ENCODE measurements at regions of chr15 and their contacts with region 1.

Region 1: DNA sequence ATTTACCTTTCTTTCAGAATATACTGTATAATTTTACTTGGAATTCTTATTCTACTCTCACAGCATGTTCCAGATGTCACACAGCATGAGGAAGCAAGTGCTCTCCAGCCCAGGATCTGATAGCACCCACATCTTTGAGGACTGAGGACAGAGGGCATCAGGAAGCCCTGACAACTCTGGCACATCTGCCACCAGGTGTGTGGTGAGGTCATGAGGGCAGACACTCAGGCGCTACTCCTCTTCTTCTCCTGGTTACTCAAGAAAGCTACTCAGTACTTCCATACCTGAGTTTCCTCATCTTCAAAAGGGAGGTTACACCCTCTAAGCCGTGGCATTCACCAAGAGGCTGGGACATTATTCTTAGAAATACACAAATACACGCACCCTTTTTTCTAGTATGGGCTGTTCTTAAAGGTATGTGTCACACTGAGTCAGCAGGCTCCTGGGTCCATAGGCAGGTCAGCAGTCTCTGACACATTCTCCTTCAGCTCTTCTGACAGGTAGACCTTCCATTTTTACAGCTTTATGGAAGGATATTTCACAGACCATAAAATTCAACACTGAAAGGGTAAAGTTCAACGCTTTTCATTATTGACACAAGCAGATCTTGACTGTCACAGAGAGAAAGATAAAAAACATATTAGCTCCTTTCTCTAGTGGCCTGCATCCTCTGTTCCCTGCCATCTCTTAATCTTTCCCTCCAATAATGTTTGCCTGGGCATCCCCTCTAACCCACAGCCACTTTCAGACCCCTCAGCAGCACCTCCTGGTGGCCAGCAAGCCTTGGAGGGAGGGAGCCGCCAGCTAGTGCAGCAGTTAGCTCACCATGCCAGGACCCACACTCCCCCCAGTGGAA is 103.2 kb upstream of the TJP1 start:
- DNase-seq: peak; percentile 68
- H3K4me3 Mint-ChIP-seq: no peak overlapping the region
- H3K27ac Mint-ChIP-seq: peak overlapping the region; percentile 67
- H3K4me1 Mint-ChIP-seq: peaks cover 28% of the 10 kb centered on the region
- H3K27me3 Mint-ChIP-seq: no peaks in the 10 kb centered on the region
- CTCF ChIP-seq: peak; percentile 70

Region 2: GRCh38 chr15:29115093-29115991 is 810.1 kb before region 1 on chr15:
- CTCF ChIA-PET with region 1: no interaction called
- POLR2A ChIA-PET with region 1: no interaction called
- intact Hi-C with region 1: no loop called
- DNase-seq: no peak
- H3K4me3 Mint-ChIP-seq: no peak overlapping the region
- H3K27ac Mint-ChIP-seq: no peak overlapping the region
- H3K4me1 Mint-ChIP-seq: no peaks in the 10 kb centered on the region
- H3K27me3 Mint-ChIP-seq: peaks cover 25% of the 10 kb centered on the region
- CTCF ChIP-seq: no peak

Region 3: GRCh38 chr15:29631076-29632070 is 294.1 kb before region 1 on chr15:
- CTCF ChIA-PET with region 1: no interaction called
- POLR2A ChIA-PET with region 1: no interaction called
- intact Hi-C with region 1: no loop called
- DNase-seq: no peak
- H3K4me3 Mint-ChIP-seq: no peak overlapping the region
- H3K27ac Mint-ChIP-seq: no peak overlapping the region
- H3K4me1 Mint-ChIP-seq: peaks cover 5% of the 10 kb centered on the region
- H3K27me3 Mint-ChIP-seq: peaks cover 51% of the 10 kb centered on the region
- CTCF ChIP-seq: no peak

Region 4: DNA sequence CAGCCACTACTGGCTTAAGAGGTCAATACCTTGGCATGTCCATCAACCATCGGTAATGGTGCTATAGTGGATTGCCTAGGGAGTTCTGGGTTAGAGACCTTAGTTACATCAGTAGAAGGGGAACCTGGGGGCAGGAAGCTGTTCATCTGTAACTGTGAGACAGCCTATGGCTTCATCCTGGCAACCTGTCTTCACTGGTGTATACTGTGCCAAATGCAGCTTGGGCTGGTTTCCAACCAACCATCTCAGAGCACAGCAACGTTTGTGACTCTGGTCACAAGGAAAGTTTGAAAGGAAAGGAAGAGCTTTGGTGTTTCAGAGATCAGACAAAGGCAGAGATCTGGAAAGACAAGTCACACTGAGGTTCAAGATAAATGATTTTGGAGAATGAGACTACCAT is 197.0 kb before region 1 on chr15:
- CTCF ChIA-PET with region 1: no interaction called
- POLR2A ChIA-PET with region 1: no interaction called
- intact Hi-C with region 1: no loop called
- DNase-seq: no peak
- H3K4me3 Mint-ChIP-seq: no peak overlapping the region
- H3K27ac Mint-ChIP-seq: no peak overlapping the region
- H3K4me1 Mint-ChIP-seq: no peaks in the 10 kb centered on the region
- H3K27me3 Mint-ChIP-seq: no peaks in the 10 kb centered on the region
- CTCF ChIP-seq: no peak

Region 5: DNA sequence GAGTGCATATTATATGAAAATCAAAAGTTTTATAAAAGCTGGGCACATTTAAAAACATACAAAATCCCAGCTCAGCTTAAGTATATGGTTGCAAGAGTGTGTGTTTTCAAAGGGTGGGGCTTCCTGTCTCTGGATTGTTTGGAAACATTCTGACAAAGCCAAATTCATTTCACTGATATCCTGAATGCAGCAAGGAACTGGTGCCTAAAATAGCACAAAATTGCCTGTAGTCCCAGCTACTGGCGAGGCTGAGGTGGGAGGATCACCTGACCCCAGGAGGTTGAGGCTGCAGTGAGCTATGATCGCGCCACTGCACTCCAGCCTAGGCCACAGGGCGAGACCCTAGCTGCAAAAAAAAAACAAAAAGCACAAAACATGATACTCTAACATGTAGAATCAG is 90.2 kb before region 1 on chr15:
- CTCF ChIA-PET with region 1: interaction called, 15 read pairs
- POLR2A ChIA-PET with region 1: interaction called, 7 read pairs
- intact Hi-C with region 1: no loop called
- DNase-seq: peak; percentile 65
- H3K4me3 Mint-ChIP-seq: no peak overlapping the region
- H3K27ac Mint-ChIP-seq: peak overlapping the region; percentile 61
- H3K4me1 Mint-ChIP-seq: peaks cover 14% of the 10 kb centered on the region
- H3K27me3 Mint-ChIP-seq: no peaks in the 10 kb centered on the region
- CTCF ChIP-seq: no peak

Region 6: DNA sequence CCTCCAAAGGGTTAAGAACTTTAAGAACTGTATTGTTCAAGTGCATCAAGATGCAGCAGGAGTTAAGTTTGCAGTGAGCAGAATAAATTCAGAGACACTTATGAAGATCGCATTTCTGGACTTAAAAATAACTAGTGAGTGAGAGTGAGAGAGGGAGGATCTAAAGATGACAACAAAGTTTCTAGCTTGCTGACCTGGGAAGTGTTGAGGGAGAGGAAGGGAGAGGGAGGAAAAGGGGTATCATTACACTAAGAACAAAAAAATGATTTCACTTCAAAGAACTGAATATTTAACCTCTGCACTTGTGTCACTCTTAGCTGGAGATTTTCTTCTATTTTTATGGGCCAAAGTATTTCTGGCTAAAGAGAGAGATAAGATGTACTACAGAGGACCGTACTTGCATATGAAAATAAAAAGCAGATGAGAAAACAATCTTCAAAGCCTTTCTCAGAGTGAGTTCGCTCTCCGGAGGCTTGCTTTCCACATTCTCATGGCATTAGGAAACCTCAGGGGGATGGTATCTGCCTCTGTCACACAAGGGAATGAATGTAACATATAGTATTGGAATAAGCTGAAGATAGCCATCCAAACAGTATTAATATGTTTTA is 11.8 kb before region 1 on chr15:
- CTCF ChIA-PET with region 1: interaction called, 15 read pairs
- POLR2A ChIA-PET with region 1: no interaction called
- intact Hi-C with region 1: no loop called
- DNase-seq: no peak
- H3K4me3 Mint-ChIP-seq: no peak overlapping the region
- H3K27ac Mint-ChIP-seq: no peak overlapping the region
- H3K4me1 Mint-ChIP-seq: peaks cover 17% of the 10 kb centered on the region
- H3K27me3 Mint-ChIP-seq: no peaks in the 10 kb centered on the region
- CTCF ChIP-seq: no peak

Measured in MCF 10A (cell line).